Heart left ventricle (tissue), 16 donors: ENCODE measurements at regions of chr15 and their contacts with region 1.

Region 1: GRCh38 chr15:42056934-42057779 is 36.3 kb upstream of the PLA2G4E start:
- DNase-seq: peak; percentile 75 to 89 (median 88)
- ATAC-seq: peak; percentile 87 to 97 (median 94)
- H3K4me3 ChIP-seq: peak overlapping the region in 8 of 12 donors; percentile 4 to 37 (median 34)
- H3K27ac ChIP-seq: no peak overlapping the region
- H3K4me1 ChIP-seq: peaks cover 0 to 15% (median 5%) of the 10 kb centered on the region in 12 donors
- H3K27me3 ChIP-seq: peaks cover 0 to 3% (median 0%) of the 10 kb centered on the region in 9 donors
- CTCF ChIP-seq: peak; percentile 58 to 84 (median 70)
- POLR2A ChIP-seq: no peak

Region 2: DNA sequence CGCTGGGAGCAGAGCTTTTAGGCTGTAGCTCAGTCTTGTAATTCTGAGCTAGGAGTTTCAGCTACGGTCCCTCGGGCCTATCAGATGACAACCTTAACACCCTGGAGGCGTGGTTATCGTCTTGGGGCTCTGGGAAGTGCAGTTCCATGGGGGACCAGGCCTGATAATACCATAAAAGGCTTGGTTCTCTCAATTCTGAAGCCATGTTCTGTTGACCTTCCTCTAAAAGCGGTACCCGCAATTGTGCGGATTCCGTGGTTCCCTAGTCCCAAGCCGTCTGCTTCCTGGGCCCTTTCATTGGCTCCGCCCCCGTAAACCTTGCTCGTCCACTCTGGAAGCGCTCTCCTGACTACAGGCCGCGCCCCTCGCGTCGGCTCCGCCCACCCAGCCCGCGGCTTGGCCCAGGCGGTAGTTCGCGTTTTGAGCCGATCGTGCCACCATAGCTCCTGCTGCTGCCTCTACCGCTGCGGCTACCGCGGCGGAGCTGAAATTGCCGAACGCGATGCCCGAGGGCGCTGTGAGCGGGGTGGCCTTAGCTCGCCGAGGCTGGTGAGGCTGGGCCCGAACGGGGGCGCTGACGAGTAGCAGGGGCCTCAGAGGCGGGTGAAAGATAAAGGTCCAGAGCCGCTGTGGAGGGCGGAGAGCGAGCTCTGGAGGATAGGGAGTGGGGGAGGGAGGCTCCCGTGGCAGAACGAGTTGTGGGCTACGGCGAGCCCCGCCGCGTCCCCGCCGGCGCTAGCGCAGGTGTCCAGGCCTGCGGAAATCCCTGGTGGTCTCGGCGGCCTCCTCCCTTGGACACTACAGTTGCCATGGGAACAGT is 282.9 kb before region 1 on chr15 and contains the start of gene MAPKBP1:
- intact Hi-C with region 1: loop called in 1 of 10 experiments (anchors 10 kb)
- DNase-seq: peak; percentile 97 to 98 (median 98)
- ATAC-seq: peak; percentile 97 to 98 (median 98)
- H3K4me3 ChIP-seq: peak within 1 kb of the TSS; percentile 70 to 87 (median 78)
- H3K27ac ChIP-seq: peak within 1 kb of the TSS; percentile 39 to 92 (median 86)
- H3K4me1 ChIP-seq: peaks cover 3 to 49% (median 31%) of the 10 kb centered on the region in 12 donors
- H3K27me3 ChIP-seq: no peaks in the 10 kb centered on the region
- CTCF ChIP-seq: peak; percentile 25 to 94 (median 64)
- POLR2A ChIP-seq: peak in 1 of 2 donors; percentile 58
- total RNA-seq, gene MAPKBP1: 12.0 to 20.5 (median 14.8) TPM

Region 3: DNA sequence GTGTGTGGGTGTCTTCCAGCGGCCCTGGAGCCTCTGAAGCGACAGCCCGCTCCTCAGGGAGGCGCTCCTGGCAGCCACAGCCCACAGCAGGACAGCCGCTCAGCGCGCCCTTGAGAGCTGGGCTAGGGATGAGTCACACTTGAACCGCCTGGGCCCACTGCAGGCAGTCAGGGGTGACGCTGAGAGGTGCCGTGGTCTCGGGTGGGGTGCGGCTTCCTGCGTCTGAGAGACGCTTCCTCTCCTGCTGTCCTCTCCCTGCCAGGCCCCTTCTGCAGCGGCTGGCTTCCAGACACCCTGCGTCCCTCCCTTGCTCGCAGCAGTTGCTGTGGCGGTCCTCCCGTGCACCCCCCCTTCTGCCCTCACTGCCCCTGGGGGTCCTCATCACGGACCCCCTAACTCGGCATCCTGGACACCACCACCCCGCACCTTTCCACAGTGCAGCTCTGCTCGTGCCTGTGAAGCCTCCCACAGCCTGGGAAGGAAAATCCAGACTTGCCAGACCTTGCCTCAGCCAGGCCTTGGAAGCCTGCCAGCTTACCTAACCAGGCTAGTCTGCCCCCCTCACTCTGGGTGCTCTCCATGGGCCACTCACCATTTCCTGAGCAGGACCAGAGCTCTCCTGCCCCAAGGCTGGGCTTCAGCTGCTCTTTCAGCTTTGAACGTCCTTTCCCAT is 162.2 kb before region 1 on chr15:
- intact Hi-C with region 1: loop called in 3 of 10 experiments (anchors 10 kb)
- DNase-seq: peak; percentile 83 to 92 (median 90)
- ATAC-seq: peak; percentile 77 to 90 (median 85)
- H3K4me3 ChIP-seq: peak overlapping the region in 10 of 12 donors; percentile 20 to 67 (median 56)
- H3K27ac ChIP-seq: peak overlapping the region; percentile 18 to 96 (median 88)
- H3K4me1 ChIP-seq: peaks cover 9 to 35% (median 26%) of the 10 kb centered on the region in 12 donors
- H3K27me3 ChIP-seq: no peaks in the 10 kb centered on the region
- CTCF ChIP-seq: peak in 5 of 12 donors; percentile 19 to 48 (median 31)
- POLR2A ChIP-seq: no peak

Region 4: GRCh38 chr15:41917767-41918430 is 139.3 kb before region 1 on chr15:
- intact Hi-C with region 1: loop called in 2 of 10 experiments (anchors 10 kb)
- DNase-seq: peak in 2 of 5 donors; percentile 68 to 70
- ATAC-seq: peak; percentile 23 to 64 (median 45)
- H3K4me3 ChIP-seq: no peak overlapping the region
- H3K27ac ChIP-seq: peak overlapping the region; percentile 42 to 93 (median 83)
- H3K4me1 ChIP-seq: peaks cover 27 to 100% (median 94%) of the 10 kb centered on the region in 12 donors
- H3K27me3 ChIP-seq: no peaks in the 10 kb centered on the region
- CTCF ChIP-seq: no peak
- POLR2A ChIP-seq: no peak

Region 5: GRCh38 chr15:41989259-41989933 is 67.8 kb before region 1 on chr15:
- intact Hi-C with region 1: loop called (anchors 1 to 2 kb)
- DNase-seq: peak; percentile 77 to 91 (median 83)
- ATAC-seq: peak; percentile 65 to 91 (median 89)
- H3K4me3 ChIP-seq: no peak overlapping the region
- H3K27ac ChIP-seq: no peak overlapping the region
- H3K4me1 ChIP-seq: peaks cover 0 to 10% (median 0%) of the 10 kb centered on the region in 12 donors
- H3K27me3 ChIP-seq: no peaks in the 10 kb centered on the region
- CTCF ChIP-seq: peak; percentile 96 to 100 (median 98)
- POLR2A ChIP-seq: no peak

Region 6: GRCh38 chr15:42010434-42010833 is 46.7 kb before region 1 on chr15:
- intact Hi-C with region 1: no loop called
- DNase-seq: no peak
- ATAC-seq: no peak
- H3K4me3 ChIP-seq: no peak overlapping the region
- H3K27ac ChIP-seq: no peak overlapping the region
- H3K4me1 ChIP-seq: no peaks in the 10 kb centered on the region
- H3K27me3 ChIP-seq: no peaks in the 10 kb centered on the region
- CTCF ChIP-seq: no peak
- POLR2A ChIP-seq: no peak

Region 7: GRCh38 chr15:42118650-42119445 is 61.7 kb after region 1 on chr15:
- intact Hi-C with region 1: no loop called
- DNase-seq: no peak
- ATAC-seq: peak in 2 of 4 donors; percentile 41 to 51
- H3K4me3 ChIP-seq: no peak overlapping the region
- H3K27ac ChIP-seq: no peak overlapping the region
- H3K4me1 ChIP-seq: peaks cover 0 to 5% (median 0%) of the 10 kb centered on the region in 12 donors
- H3K27me3 ChIP-seq: no peaks in the 10 kb centered on the region
- CTCF ChIP-seq: no peak
- POLR2A ChIP-seq: no peak